Left cardiac atrium (tissue), 4 donors: ENCODE measurements at regions of chr6 and their contacts with region 1.

Region 1: GRCh38 chr6:96897383-96898240 is at the start of gene NDUFAF4:
- DNase-seq: peak; percentile 98
- ATAC-seq: peak; percentile 99
- total RNA-seq, gene NDUFAF4: 75.2 to 101 TPM

Region 2: GRCh38 chr6:96521644-96522464 is 375.8 kb before region 1 on chr6 and contains the start of gene UFL1:
- intact Hi-C with region 1: loop called in 1 of 2 experiments (anchors 10 kb)
- DNase-seq: peak; percentile 96
- ATAC-seq: peak; percentile 100
- total RNA-seq, gene UFL1: 22.2 to 23.7 TPM

Region 3: GRCh38 chr6:96626759-96627364 is 270.8 kb before region 1 on chr6:
- intact Hi-C with region 1: loop called in 1 of 2 experiments (anchors 5 kb)
- DNase-seq: no peak
- ATAC-seq: peak; percentile 58 to 83

Region 4: DNA sequence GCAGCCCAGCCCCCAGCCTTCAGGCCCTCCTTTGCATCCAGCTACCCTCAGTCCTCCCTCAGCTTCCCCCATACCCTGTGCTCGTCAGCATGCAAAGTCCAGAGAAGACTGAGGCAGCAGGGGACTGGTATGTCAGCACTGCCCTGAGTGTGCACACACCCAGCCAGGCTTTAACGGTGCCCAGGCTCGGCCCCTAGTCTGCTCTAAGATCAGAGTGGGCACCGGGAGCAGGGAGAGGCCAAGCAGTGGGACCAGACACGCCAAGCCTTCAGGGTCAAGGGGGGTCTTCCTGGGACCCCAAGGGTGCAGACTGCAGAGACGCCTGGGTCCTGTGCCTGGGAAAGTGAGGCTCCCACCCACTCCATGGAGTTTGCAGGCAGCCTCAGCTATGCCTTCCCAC is 135.0 kb before region 1 on chr6:
- intact Hi-C with region 1: no loop called
- DNase-seq: no peak
- ATAC-seq: no peak

Region 5: DNA sequence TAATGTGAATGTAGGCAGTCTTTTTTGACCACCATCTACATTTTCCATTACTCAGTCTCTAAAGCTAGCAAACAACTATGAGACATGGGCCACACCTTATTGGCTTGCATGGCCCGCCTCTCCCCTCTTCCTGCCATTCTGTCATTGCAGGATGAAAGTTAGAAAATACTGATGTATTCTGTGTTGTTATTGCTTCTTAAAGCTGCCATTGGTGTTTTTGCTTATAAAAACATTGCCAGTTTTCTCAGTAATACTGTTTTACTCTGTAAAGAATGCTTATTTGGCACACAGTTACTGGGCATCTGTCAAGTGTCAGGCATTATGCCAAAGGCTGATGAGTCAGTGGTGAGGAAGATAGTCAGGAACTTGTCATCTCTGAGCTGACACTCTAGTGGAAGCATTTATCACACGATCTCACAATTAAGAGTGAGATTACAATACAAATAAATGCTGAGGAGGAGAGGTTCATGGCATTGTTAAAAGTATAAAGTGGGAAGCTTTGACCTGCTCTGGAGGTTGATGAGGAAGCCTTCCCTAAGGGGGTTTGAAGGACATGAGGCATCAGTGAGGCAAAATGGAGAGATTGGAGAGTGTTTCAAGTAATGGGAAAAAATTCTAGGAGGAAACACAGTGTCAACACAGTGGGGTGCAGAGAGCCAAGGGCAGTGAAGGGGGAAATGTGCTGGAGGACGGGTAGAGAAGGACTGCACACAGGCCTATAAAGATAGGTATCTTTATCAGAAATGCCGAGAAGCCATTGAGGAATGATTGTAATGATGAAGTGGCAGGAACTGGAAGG is 41.6 kb after region 1 on chr6:
- intact Hi-C with region 1: no loop called
- DNase-seq: no peak
- ATAC-seq: peak; percentile 82 to 95

Region 6: DNA sequence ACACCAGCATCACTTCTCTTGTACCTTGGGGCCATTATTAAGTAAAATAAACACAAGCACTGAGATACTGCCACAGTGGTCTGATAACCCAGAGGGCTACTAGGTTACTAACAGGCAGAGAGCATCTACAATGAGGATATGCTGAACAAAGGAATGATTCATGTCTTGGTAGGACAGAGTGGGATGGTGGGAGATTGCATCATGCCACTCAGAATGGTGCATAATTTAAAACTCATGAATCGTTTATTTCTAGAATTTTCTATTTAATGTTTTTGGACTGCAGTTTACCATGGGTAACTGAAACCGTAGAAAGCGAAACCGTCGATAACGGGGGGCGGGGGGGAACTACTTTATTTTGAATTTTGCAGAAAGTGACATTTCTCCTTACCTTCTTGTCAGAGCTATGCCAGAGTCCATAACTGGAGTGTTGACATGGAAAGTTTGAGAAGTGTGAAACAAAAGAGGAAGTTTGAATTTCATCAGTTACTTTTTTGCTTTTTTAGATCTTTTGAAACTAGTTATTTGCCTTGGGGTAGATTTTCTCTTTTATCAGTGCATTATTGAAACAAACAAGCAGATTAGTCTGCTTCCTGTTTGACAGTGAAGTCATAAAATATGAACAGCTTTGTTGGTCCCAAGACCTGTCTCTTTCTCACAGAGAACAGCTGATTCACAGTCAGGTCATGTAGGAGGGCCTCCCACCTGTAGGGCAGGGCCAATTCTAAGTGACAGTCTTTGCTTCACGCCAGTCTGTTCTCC is 151.8 kb after region 1 on chr6:
- intact Hi-C with region 1: no loop called
- DNase-seq: no peak
- ATAC-seq: no peak

Region 7: GRCh38 chr6:97059473-97059872 is 161.9 kb after region 1 on chr6:
- intact Hi-C with region 1: loop called (anchors 2 to 5 kb)
- DNase-seq: no peak
- ATAC-seq: peak in 1 of 2 donors; percentile 44

Region 8: GRCh38 chr6:97262676-97263075 is 365.1 kb after region 1 on chr6:
- intact Hi-C with region 1: no loop called
- DNase-seq: no peak
- ATAC-seq: no peak

Region 9: DNA sequence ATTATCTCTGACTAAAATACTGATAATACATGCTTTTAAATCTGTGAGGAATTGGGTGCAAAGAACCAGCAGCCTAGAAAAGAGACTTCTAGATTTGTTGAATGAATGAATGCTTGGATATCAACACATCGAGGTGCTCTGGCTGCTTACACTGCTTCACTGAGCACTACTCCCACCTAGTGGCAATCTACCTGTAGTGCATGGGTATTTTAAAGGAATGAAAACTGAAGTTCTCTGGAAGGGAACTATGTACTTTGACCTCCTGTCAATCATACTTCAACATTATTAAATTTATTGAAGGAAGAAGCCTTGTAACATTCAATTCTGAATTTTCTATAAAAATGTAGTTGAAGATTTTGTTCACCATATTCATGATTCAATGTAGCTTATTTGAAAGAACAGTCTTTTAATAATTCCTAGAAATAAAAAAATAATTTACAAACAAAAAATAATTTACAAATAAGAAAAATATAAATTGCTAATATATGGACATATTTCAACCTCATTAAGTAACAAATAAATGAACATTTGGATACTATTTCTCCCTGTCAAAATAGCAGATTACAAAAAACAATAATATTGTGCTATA is 496.6 kb after region 1 on chr6:
- intact Hi-C with region 1: loop called in 1 of 2 experiments (anchors 10 kb)
- DNase-seq: no peak
- ATAC-seq: peak; percentile 38 to 49